ENCODE measurements at regions of chr10 and their contacts with region 1.

Region 1: GRCh38 chr10:24518981-24519597 is 204.6 kb downstream of the ARHGAP21 start:
- DNase-seq: peak in 1 of 2 donors; percentile 53
- ATAC-seq: peak; percentile 76
- H3K4me3 ChIP-seq: no peak overlapping the region
- H3K27ac ChIP-seq: no peak overlapping the region
- H3K4me1 ChIP-seq: peaks cover 0 to 3% of the 10 kb centered on the region in 2 donors
- H3K27me3 ChIP-seq: no peaks in the 10 kb centered on the region

Region 2: DNA sequence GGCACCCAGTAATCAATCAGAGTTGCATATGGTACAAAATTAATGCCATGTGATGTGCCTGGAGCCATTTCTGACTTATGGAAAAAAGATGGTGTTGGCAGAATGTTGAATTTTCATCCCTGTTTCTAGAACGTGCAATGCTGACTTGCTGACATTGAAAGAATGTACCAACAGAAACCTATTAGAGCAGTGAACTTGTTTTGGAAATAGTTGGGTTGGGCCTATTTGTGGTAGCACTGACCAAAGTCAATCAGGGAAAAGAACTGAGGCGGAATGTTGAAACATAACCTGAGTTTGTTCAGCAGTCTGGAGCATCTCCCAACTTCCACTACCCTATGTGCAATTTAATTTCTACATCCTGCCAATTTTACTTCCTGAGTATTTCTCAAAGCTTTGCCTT is 321.8 kb before region 1 on chr10:
- intact Hi-C with region 1: loop called in 1 of 2 experiments (anchors 10 kb)
- DNase-seq: no peak
- ATAC-seq: no peak
- H3K4me3 ChIP-seq: no peak overlapping the region
- H3K27ac ChIP-seq: no peak overlapping the region
- H3K4me1 ChIP-seq: no peaks in the 10 kb centered on the region
- H3K27me3 ChIP-seq: no peaks in the 10 kb centered on the region